ENCODE measurements at regions of chr10 and their contacts with region 1.

Region 1: GRCh38 chr10:124152916-124153826 is 59.8 kb upstream of the CHST15 start:
- DNase-seq: peak; percentile 90
- H3K4me3 Mint-ChIP-seq: no peak overlapping the region
- H3K27ac Mint-ChIP-seq: no peak overlapping the region
- H3K4me1 Mint-ChIP-seq: peaks cover 7% of the 10 kb centered on the region
- H3K27me3 Mint-ChIP-seq: peaks cover 16% of the 10 kb centered on the region

Region 2: DNA sequence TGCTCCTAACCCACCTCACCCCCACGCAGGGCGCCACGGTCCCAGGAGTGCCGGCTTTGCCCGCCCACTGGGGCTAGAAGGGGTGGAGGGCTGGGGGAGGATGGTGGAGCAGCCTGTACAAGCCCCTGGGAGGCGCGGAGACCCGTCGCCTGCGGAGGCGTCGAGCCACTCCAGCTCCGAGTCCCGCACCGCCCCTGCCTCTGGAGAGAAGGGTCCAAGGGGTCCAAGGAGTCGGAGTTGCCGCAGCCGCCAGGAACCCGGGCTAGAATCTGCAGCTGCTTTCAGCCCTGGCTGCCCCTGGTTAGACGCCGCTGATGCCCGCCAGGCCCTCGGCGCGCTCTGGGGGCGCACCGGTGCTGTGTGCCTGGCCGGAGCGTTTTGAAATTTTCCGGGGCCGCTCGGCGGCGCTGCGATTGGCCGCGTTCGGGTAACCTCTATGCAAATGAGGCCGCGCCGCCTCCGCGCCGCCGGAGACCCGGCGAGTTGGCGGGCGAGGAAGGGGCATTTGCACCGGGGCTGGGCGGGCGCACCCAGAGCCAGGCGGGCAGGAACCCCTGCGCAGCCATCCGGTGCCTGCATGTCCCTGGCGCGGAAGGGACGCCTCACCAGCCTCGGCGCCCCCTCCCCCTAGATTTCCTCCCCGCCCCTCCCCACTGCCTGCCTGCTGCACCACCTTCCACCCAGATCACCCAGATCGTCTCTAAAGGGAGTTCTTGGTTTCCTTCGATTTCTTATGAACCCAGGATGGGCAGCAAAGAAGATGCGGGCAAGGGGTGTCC is 1005.3 kb before region 1 on chr10 and contains the start of gene HMX2:
- CTCF ChIA-PET with region 1: no interaction called
- intact Hi-C with region 1: loop called (anchors 10 kb)
- DNase-seq: peak; percentile 58
- H3K4me3 Mint-ChIP-seq: peak within 1 kb of the TSS; percentile 63
- H3K27ac Mint-ChIP-seq: no peak within 1 kb of the TSS
- H3K4me1 Mint-ChIP-seq: peaks cover 63% of the 10 kb centered on the region
- H3K27me3 Mint-ChIP-seq: peaks cover 50% of the 10 kb centered on the region
- total RNA-seq, gene HMX2: 0.62 to 0.99 TPM

Region 3: GRCh38 chr10:124035928-124036558 is 117.1 kb before region 1 on chr10:
- CTCF ChIA-PET with region 1: no interaction called
- intact Hi-C with region 1: loop called (anchors 10 kb)
- DNase-seq: peak; percentile 54
- H3K4me3 Mint-ChIP-seq: no peak overlapping the region
- H3K27ac Mint-ChIP-seq: no peak overlapping the region
- H3K4me1 Mint-ChIP-seq: peaks cover 7% of the 10 kb centered on the region
- H3K27me3 Mint-ChIP-seq: no peaks in the 10 kb centered on the region

Region 4: DNA sequence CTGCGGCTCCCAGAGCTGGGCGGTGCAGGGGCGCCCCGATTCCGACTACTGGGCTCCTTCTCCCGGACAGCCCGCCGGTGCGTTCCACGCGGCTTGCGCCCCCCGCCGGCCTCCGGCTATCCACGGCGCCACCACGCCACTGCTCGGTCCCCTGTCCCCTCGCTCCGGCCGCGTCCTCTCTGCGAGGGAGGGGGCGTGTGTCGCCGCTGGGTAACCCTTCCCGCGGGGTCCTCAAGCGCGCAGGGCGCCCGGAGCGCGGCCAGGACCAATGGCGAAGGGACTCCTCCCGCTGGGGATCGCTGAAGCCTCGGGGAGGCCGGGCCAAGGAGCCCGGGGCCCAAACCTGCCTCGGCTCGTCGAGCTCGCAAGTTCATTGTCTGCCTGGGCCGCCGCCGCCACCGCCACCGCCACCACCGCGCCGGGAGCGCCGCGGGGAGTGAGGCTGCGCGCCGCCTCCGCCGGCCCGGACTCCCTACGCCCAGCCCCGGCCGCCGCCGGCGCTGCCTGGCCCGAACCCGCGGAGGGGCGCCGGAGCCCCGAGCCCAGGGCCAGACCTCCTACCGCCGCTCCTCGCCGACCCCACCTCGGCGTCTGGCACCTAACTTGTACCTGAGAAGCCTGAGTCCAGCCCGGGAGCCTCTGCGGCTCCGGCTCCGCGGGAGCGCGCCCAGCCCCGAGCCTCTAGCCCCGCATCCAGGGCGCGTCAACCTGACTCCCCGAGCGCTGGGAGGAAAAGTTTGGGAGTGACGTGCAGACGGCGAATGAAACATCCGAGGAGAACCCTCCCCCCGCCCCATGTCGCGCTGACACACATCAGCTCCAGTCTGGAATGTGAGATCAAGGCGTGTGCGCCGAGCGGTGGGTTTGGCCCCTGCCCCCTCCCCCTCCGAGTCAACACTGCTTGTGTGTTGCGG is 60.1 kb before region 1 on chr10 and contains the start of gene CHST15:
- CTCF ChIA-PET with region 1: no interaction called
- intact Hi-C with region 1: loop called (anchors 1 kb)
- DNase-seq: peak; percentile 12
- H3K4me3 Mint-ChIP-seq: peak within 1 kb of the TSS; percentile 58
- H3K27ac Mint-ChIP-seq: no peak within 1 kb of the TSS
- H3K4me1 Mint-ChIP-seq: peaks cover 2% of the 10 kb centered on the region
- H3K27me3 Mint-ChIP-seq: peaks cover 55% of the 10 kb centered on the region
- total RNA-seq, gene CHST15: 0.47 to 0.50 TPM

Region 5: DNA sequence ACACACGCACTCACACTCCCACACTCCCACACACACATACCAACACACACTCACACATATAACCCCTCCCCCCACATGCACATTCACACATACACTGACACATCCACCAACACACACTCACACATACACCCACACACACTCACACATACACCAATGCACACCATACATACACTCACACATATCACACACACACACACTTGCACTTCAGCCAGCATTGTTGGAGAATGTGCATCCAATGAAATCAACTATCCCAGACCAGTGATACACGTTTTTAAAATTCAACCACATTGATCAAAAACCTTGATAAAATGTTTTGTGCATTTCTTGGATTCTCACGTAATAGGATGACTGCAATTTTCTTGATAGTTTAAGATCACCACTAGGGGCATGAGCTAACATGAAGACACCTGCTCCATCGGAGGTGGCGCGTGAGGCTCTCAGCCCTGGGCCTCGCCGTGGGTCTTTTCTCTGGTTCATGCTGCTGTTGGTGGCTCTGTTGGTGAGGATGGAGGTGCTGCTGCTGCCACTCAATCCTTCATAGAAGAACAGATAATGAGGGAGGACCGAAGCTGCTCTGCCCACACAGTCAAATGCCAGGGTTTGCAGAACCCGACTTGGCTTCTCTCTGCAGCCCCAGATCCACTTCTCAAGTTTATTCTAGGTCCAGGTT is 27.6 kb before region 1 on chr10:
- CTCF ChIA-PET with region 1: no interaction called
- intact Hi-C with region 1: loop called (anchors 2 kb)
- DNase-seq: peak; percentile 18
- H3K4me3 Mint-ChIP-seq: no peak overlapping the region
- H3K27ac Mint-ChIP-seq: no peak overlapping the region
- H3K4me1 Mint-ChIP-seq: no peaks in the 10 kb centered on the region
- H3K27me3 Mint-ChIP-seq: no peaks in the 10 kb centered on the region

Region 6: DNA sequence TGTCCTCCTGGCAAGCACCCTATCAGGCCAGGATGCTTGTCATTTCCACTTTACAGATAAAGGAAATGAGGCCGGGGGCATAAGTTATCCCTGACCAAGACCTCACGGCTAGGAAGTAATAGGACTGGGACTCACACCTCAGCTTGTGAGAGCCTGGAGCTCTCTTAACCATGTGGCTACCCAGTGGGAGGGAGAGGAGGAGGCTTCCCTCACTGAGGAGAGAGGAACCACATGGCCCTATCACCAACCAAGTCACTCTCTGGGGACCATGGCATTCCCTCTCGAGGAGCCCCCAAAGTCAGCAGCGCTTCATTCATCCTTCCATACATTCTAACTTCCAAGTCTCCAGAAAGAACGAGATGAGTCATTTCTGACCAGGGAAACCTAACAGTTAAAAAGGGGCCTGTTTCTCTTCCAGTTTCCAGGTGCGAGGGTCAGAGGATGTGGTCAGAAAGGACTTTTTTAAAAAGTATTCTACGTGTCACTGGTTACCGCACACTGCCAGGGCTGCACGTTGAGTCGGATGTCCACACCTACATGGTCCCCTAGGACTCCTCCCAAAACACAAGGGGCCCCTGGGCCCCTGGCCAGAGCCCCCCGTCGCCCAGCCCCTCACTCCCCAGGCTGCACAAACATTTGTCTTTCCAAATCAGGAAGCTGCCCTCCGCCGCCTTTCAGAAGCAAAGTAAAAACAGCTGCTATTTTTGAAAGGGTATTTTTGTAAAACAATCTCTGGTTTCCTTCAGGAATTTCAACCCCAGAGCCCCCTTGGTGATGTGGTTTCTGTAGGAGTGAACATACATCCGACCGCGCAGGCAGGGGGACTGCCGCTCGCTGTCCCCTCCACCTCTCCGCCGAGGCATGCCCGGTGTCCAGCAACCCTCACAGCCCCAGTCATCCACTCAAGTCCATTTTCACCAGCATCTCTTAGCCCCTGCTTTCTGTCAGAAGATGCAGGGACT is 68.5 kb after region 1 on chr10:
- CTCF ChIA-PET with region 1: no interaction called
- intact Hi-C with region 1: loop called (anchors 1 kb)
- DNase-seq: no peak
- H3K4me3 Mint-ChIP-seq: no peak overlapping the region
- H3K27ac Mint-ChIP-seq: no peak overlapping the region
- H3K4me1 Mint-ChIP-seq: no peaks in the 10 kb centered on the region
- H3K27me3 Mint-ChIP-seq: no peaks in the 10 kb centered on the region

Measured in activated naive CD4-positive, alpha-beta T cell treated with anti-CD3 and anti-CD28 coated beads for 36 hours (primary cell).